OCI-LY7 (cell line): ENCODE measurements at regions of chr17 and their contacts with region 1.

Region 1: GRCh38 chr17:81519284-81519955 is 6.8 kb upstream of the ACTG1 start:
- DNase-seq: peak; percentile 78
- H3K4me3 ChIP-seq: peak overlapping the region; percentile 90
- H3K27ac ChIP-seq: peak overlapping the region; percentile 89
- H3K4me1 ChIP-seq: peaks cover 55% of the 10 kb centered on the region
- CTCF ChIP-seq: peak; percentile 77

Region 2: DNA sequence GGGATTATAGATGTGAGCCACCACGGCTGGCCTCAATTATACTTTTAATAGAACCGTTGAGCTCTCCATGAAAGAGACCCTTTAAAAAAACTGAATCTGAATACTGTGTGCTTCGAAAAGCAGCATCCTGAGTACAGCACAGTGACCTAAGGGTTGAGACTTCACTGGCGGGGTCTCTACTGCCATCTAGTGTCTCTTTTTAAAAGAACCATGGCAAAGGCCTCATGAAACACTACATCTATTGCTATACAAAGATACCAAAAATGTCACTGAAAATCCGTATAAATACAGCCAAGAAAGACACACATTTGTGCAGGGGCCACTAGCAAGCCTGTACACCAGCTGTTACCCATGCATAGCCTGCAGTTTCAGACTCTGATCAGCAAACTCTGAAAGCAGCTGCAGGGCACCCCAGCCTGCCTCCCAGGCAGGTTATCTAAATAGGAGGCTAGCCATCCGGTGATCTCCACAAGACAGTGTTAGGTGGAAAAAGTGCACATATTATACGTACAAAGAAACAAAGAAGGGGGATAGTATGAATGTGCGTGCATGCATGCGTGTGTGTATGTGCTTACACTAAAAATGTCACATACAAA is 82.2 kb after region 1 on chr17:
- CTCF ChIA-PET with region 1: interaction called, 9 read pairs
- POLR2A ChIA-PET with region 1: interaction called, 5 read pairs
- intact Hi-C with region 1: loop called (anchors 1 kb)
- DNase-seq: peak; percentile 82
- H3K4me3 ChIP-seq: no peak overlapping the region
- H3K27ac ChIP-seq: peak overlapping the region; percentile 12
- H3K4me1 ChIP-seq: peaks cover 28% of the 10 kb centered on the region
- CTCF ChIP-seq: peak; percentile 100

Region 3: GRCh38 chr17:81621494-81622130 is 102.2 kb after region 1 on chr17:
- CTCF ChIA-PET with region 1: no interaction called
- POLR2A ChIA-PET with region 1: no interaction called
- intact Hi-C with region 1: no loop called
- DNase-seq: no peak
- H3K4me3 ChIP-seq: no peak overlapping the region
- H3K27ac ChIP-seq: no peak overlapping the region
- H3K4me1 ChIP-seq: no peaks in the 10 kb centered on the region
- CTCF ChIP-seq: no peak

Region 4: GRCh38 chr17:81702971-81703746 is 183.7 kb after region 1 on chr17 and contains the start of gene MRPL12:
- CTCF ChIA-PET with region 1: no interaction called
- POLR2A ChIA-PET with region 1: no interaction called
- intact Hi-C with region 1: no loop called
- DNase-seq: peak; percentile 99
- H3K4me3 ChIP-seq: peak within 1 kb of the TSS; percentile 92
- H3K27ac ChIP-seq: peak within 1 kb of the TSS; percentile 80
- H3K4me1 ChIP-seq: peaks cover 23% of the 10 kb centered on the region
- CTCF ChIP-seq: no peak
- total RNA-seq, gene MRPL12: 49.8 and 67.2 TPM in 2 replicates